ENCODE measurements at regions of chr16 and their contacts with region 1.

Region 1: DNA sequence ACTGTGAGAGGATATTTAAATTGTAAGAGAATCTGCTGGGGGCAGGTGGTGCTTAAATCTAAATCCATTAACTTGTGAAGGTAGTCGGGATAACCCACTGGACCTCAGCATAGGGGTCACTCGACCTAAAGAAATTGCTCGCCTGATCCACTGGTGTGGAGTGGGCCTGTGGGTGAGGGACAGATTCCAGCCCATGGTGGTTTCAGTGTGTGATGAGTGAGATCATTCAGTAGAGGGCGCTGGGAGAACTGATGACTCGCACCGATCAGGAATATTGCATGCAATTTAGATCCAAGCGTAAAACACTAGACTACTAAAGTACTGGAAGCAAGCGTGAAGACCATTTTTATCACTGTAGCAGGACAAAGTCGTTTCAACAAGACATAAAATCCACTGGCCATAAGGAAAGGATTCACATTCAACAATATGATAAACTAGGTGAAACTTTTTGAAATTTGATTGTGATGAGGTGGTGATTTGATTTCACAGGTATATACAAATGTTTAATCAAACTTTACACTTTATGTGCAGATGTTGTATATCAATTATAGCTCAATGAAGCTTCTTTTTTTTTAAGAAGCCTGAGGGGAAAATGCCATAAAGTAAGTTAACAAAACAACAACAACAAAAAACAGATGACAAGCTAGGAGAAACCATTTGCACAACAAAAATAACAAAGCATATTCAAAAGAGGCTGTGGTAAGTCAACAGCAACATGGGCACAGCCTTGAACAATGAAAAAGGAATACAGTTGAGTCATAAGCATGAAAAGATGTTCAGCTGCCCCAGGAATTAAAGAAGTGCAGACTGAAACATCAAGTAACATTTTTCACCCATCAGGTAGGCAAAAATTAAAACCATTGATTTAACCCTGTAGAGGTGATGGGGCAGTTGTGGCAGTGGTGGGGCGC is 7.5 kb upstream of the TMEM170A start:
- DNase-seq: peak; percentile 55
- H3K4me3 ChIP-seq: no peak overlapping the region
- H3K27ac ChIP-seq: no peak overlapping the region
- H3K4me1 ChIP-seq: peaks cover 6% of the 10 kb centered on the region
- H3K27me3 ChIP-seq: no peaks in the 10 kb centered on the region
- CTCF ChIP-seq: peak; percentile 78 to 80

Region 2: GRCh38 chr16:75053791-75054555 is 418.0 kb before region 1 on chr16:
- CTCF ChIA-PET with region 1: interaction called, 14 read pairs
- dilution Hi-C with region 1: no loop called
- in situ Hi-C with region 1: no loop called
- intact Hi-C with region 1: no loop called
- DNase-seq: no peak
- H3K4me3 ChIP-seq: no peak overlapping the region
- H3K27ac ChIP-seq: no peak overlapping the region
- H3K4me1 ChIP-seq: peaks cover 5% of the 10 kb centered on the region
- H3K27me3 ChIP-seq: no peaks in the 10 kb centered on the region
- CTCF ChIP-seq: no peak

Region 3: GRCh38 chr16:75491876-75492275 is 19.9 kb after region 1 on chr16:
- CTCF ChIA-PET with region 1: no interaction called
- dilution Hi-C with region 1: no loop called
- in situ Hi-C with region 1: no loop called
- intact Hi-C with region 1: loop called (anchors 1 kb)
- DNase-seq: peak; percentile 36
- H3K4me3 ChIP-seq: no peak overlapping the region
- H3K27ac ChIP-seq: no peak overlapping the region
- H3K4me1 ChIP-seq: peaks cover 18% of the 10 kb centered on the region
- H3K27me3 ChIP-seq: no peaks in the 10 kb centered on the region
- CTCF ChIP-seq: peak; percentile 32 to 60

Region 4: GRCh38 chr16:75550211-75550662 is 78.3 kb after region 1 on chr16:
- CTCF ChIA-PET with region 1: no interaction called
- dilution Hi-C with region 1: loop called (anchors 5 kb)
- in situ Hi-C with region 1: no loop called
- intact Hi-C with region 1: loop called (anchors 1 kb)
- DNase-seq: peak; percentile 88
- H3K4me3 ChIP-seq: peak overlapping the region; percentile 10 to 38 (median 37)
- H3K27ac ChIP-seq: peak overlapping the region; percentile 52
- H3K4me1 ChIP-seq: peaks cover 6% of the 10 kb centered on the region
- H3K27me3 ChIP-seq: no peaks in the 10 kb centered on the region
- CTCF ChIP-seq: peak; percentile 85 to 96

Region 5: DNA sequence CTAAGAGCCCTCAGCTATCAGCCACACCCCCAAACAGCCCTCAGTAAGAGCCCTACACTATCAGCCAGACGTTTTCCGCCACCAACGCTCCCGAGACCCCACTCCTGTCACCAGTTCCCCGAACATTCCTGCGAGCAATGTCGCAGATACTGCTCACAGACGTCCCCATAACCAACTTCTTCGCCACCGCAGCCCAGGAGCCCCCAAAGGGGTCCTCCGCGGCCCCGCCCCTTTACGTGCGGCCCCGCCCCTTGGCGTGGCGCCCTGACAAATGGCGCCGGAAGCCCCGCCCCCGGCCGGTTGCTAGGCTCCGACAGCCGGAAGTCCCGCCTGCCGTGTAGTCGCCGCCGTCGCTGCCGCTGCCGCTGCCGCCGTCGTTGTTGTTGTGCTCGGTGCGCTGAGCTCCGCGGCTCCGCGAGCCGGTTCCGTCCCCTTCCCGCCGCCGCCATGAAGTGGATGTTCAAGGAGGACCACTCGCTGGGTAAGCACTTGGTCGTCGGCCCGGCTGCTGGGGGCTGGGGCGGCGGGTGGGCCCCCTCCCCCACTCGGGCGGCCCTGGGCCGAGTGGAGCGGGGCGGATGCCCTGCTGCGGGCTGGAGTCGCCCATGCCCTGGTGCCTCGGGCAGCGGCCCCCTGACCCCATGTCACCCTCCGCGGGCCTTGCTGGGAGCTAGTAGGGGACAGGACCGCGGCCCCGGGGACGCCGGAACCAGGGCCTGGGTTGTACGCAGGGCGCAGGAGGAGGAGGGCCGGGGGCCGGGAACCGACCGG is 94.2 kb after region 1 on chr16 and contains the start of gene GABARAPL2:
- CTCF ChIA-PET with region 1: no interaction called
- dilution Hi-C with region 1: no loop called
- in situ Hi-C with region 1: no loop called
- intact Hi-C with region 1: loop called (anchors 5 kb)
- DNase-seq: peak; percentile 70
- H3K4me3 ChIP-seq: peak within 1 kb of the TSS; percentile 73 to 87 (median 78)
- H3K27ac ChIP-seq: peak within 1 kb of the TSS; percentile 69
- H3K4me1 ChIP-seq: peaks cover 11% of the 10 kb centered on the region
- H3K27me3 ChIP-seq: no peaks in the 10 kb centered on the region
- CTCF ChIP-seq: no peak
- total RNA-seq, gene GABARAPL2: 41.2 to 63.2 TPM

Measured in mammary epithelial cell (primary cell).